ENCODE measurements at regions of chr6 and their contacts with region 1.

Region 1: GRCh38 chr6:43308101-43308989 is at the start of gene CRIP3:
- DNase-seq: peak; percentile 90
- ATAC-seq: peak; percentile 98
- H3K4me3 Mint-ChIP-seq: peak within 1 kb of the TSS; percentile 84
- H3K27ac Mint-ChIP-seq: peak within 1 kb of the TSS; percentile 84; the same call in 1 of the 2 replicates
- H3K4me1 Mint-ChIP-seq: peaks cover 27% of the 10 kb centered on the region
- H3K27me3 Mint-ChIP-seq: 0 out of 2 replicates have a peak, but pooled peaks cover 4% of the 10 kb centered on the region
- CTCF ChIP-seq: no peak
- total RNA-seq, gene CRIP3: 44.7 to 48.9 TPM (median 45.6 TPM) in 3 replicates

Region 2: GRCh38 chr6:43263314-43264178 is 44.8 kb before region 1 on chr6:
- CTCF ChIA-PET with region 1: interaction called, 19 read pairs
- POLR2A ChIA-PET with region 1: no interaction called
- DNase-seq: peak; percentile 90
- ATAC-seq: peak; percentile 87
- H3K4me3 Mint-ChIP-seq: no peak overlapping the region
- H3K27ac Mint-ChIP-seq: peak overlapping the region; percentile 28; the same call in 1 of the 2 replicates
- H3K4me1 Mint-ChIP-seq: peaks cover 24% of the 10 kb centered on the region
- H3K27me3 Mint-ChIP-seq: peaks cover 14% of the 10 kb centered on the region
- CTCF ChIP-seq: peak; percentile 60; the same call in 1 of the 2 replicates

Region 3: GRCh38 chr6:43269273-43270007 is 38.9 kb before region 1 on chr6:
- CTCF ChIA-PET with region 1: interaction called, 19 read pairs
- POLR2A ChIA-PET with region 1: interaction called, 4 read pairs
- DNase-seq: peak; percentile 50
- ATAC-seq: peak; percentile 43
- H3K4me3 Mint-ChIP-seq: peak overlapping the region; percentile 59
- H3K27ac Mint-ChIP-seq: no peak overlapping the region
- H3K4me1 Mint-ChIP-seq: peaks cover 38% of the 10 kb centered on the region
- H3K27me3 Mint-ChIP-seq: peaks cover 67% of the 10 kb centered on the region
- CTCF ChIP-seq: no peak

Region 4: DNA sequence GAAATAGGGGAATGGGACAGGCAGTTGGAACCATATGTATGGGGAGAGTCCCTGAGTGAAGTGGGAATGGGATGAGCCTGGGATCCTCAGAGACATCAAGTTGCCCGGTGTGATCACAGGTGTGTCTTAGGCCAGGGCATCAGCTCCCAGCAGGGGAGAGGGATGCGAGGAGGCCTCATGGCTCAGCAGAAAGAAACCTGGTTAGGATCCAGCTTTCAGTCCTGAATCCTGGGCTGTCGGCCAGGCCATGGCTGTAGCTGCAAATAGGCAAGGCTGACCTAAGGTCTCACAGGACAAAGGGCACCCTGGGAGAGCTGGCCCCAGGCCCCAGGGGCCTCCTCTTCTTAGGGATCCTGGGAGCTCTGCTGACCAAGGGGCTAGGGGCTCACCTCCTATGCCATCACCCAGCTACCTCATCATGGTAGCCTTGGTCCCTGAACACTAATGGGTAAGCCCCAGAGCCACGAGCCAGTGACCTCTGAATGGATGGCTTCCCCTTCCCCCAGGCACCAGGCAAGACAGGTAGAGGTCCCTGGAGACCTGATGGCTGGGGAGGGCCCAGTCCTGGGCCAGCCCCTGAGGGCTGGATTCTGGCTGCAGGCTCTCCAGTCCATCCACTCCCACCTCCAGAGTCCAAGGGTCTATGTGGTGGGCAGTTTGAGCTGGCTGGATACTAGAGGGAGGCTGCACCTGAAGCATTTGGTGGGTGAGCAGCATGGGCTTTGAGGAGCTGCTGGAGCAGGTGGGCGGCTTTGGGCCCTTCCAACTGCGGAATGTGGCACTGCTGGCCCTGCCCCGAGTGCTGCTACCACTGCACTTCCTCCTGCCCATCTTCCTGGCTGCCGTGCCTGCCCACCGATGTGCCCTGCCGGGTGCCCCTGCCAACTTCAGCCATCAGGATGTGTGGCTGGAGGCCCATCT is 10.4 kb before region 1 on chr6 and contains the start of gene SLC22A7:
- CTCF ChIA-PET with region 1: interaction called, 45 read pairs
- POLR2A ChIA-PET with region 1: interaction called, 9 read pairs
- DNase-seq: no peak
- ATAC-seq: no peak
- H3K4me3 Mint-ChIP-seq: no peak within 1 kb of the TSS
- H3K27ac Mint-ChIP-seq: no peak within 1 kb of the TSS
- H3K4me1 Mint-ChIP-seq: peaks cover 11% of the 10 kb centered on the region
- H3K27me3 Mint-ChIP-seq: peaks cover 5% of the 10 kb centered on the region
- CTCF ChIP-seq: no peak
- total RNA-seq, gene SLC22A7: not detected in 3 replicates

Region 5: GRCh38 chr6:43334466-43335095 is 26.2 kb after region 1 on chr6:
- CTCF ChIA-PET with region 1: interaction called, 46 read pairs
- POLR2A ChIA-PET with region 1: no interaction called
- DNase-seq: no peak
- ATAC-seq: peak; percentile 97
- H3K4me3 Mint-ChIP-seq: no peak overlapping the region
- H3K27ac Mint-ChIP-seq: peak overlapping the region; percentile 50; the same call in 1 of the 2 replicates
- H3K4me1 Mint-ChIP-seq: 0 out of 2 replicates have a peak, but pooled peaks cover 4% of the 10 kb centered on the region
- H3K27me3 Mint-ChIP-seq: no peaks in the 10 kb centered on the region; the same call in 1 of the 2 replicates
- CTCF ChIP-seq: no peak

Region 6: DNA sequence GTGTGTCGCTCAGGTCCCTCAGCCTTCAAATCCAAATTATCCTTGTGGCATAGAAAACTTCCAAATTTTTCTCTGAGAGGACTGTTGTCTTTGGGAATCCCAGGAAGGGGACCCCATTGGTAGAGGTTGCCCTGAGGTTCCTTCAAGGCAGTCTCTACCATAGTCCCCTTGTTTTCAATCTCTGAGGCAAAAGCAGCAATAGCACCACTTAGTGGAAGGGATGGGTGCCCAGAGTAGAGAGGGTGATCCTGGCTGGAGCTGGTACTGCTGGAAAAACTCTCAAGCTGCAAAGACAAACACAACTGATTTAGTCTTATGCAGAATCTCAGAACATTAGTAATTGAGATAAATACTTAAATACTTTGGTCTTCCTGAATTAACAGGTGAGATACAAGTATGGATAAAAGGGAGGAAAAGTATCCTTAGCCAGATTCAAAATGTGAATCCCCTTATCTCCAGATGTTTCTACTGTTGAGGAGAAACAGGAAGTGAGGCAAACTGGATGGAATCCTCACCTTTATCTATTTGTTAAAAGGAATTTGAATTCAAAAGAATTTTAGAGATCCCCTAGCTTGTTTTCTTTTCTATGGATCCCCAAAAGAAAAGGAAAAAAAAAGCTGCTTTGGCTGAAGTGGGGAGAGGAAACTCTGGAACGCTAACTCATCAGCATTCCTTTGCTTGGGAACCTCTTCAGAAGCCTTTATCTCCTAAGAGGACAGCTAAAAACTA is 47.7 kb after region 1 on chr6:
- CTCF ChIA-PET with region 1: interaction called, 19 read pairs
- POLR2A ChIA-PET with region 1: no interaction called
- DNase-seq: peak; percentile 22
- ATAC-seq: peak; percentile 99
- H3K4me3 Mint-ChIP-seq: no peak overlapping the region
- H3K27ac Mint-ChIP-seq: peak overlapping the region; percentile 24
- H3K4me1 Mint-ChIP-seq: peaks cover 23% of the 10 kb centered on the region
- H3K27me3 Mint-ChIP-seq: no peaks in the 10 kb centered on the region
- CTCF ChIP-seq: no peak

Region 7: GRCh38 chr6:43496370-43497128 is 188.2 kb after region 1 on chr6:
- CTCF ChIA-PET with region 1: interaction called, 14 read pairs
- POLR2A ChIA-PET with region 1: no interaction called
- DNase-seq: peak; percentile 70
- ATAC-seq: peak; percentile 73
- H3K4me3 Mint-ChIP-seq: no peak overlapping the region
- H3K27ac Mint-ChIP-seq: peak overlapping the region; percentile 86; the same call in 1 of the 2 replicates
- H3K4me1 Mint-ChIP-seq: peaks cover 32% of the 10 kb centered on the region
- H3K27me3 Mint-ChIP-seq: no peaks in the 10 kb centered on the region
- CTCF ChIP-seq: peak; percentile 39; the same call in 1 of the 2 replicates